ENCODE measurements at regions of chr6 and their contacts with region 1.

Region 1: DNA sequence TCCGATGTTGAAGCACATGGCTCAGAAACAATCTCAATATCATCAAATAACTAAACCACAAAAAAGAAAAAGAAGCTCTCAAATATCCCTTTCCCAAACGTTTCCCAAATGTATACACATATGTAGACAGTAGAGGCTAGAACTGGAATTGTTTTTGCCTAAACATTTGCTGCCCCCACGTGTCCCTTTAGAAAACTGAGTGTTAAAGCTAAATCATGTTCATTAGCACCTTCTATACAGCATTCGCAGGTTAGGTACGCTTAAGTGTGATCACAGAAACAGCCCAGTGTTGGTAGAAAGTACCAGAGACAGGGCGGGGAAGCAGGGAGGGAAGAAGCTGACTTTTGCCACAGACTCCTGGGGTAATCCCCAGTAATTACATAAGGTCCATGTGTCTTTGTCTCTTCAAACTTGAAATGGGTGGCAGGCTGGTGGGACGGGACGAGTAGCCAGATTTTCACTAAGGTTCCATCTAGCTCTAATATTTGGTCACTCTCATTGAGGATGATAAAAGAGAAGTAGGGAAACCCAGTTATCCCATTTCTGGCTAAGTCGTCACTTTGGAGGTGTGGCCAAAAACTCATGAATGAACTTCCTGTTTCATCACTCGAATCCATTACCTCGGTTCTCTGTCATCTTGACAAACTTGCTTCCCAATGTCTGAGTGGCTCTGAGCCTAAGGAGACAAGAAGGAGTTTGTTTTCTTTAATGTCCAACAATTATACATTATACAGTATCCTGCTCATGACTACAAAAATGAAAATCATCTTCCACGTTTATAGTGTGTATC is 15.0 kb upstream of the TFAP2A start:
- DNase-seq: peak; percentile 50
- ATAC-seq: peak; percentile 53
- H3K4me3 ChIP-seq: no peak overlapping the region
- H3K27ac ChIP-seq: no peak overlapping the region
- H3K4me1 ChIP-seq: peaks cover 7% of the 10 kb centered on the region
- H3K27me3 ChIP-seq: peaks cover 0 to 19% of the 10 kb centered on the region in 2 experiments; a peak in 3 of 5 replicates
- CTCF ChIP-seq: peak; percentile 79
- EP300 ChIP-seq: no peak
- POLR2A ChIP-seq: no peak
- RAD21 ChIP-seq: 0 out of 2 replicates have a peak, but pooled peaks have one; percentile 36

Region 2: DNA sequence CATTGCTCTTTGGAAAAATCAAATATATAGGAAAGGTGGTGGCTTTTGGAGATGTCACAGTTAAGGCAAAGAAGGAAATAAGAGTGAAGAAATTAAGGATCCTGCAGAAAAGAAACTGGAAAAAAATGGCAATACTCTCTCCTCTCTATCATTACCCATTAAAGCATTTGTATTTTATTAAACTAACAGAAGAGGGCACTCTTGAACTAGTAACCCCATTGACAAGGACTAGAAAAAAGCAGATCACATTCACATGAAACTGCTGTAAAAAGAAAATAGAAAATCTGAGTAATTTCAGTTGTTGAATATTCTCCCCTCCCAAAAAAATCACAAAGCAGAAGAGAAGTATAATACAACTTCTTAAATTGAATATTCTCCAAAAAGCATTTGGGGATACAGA is 1890.4 kb before region 1 on chr6:
- CTCF ChIA-PET with region 1: no interaction called
- POLR2A ChIA-PET with region 1: no interaction called
- in situ Hi-C with region 1: loop called (anchors 25 kb)
- intact Hi-C with region 1: loop called (anchors 2 kb)
- DNase-seq: peak; percentile 28
- ATAC-seq: peak; percentile 75
- H3K4me3 ChIP-seq: no peak overlapping the region
- H3K27ac ChIP-seq: no peak overlapping the region
- H3K4me1 ChIP-seq: no peaks in the 10 kb centered on the region
- H3K27me3 ChIP-seq: no peaks in the 10 kb centered on the region
- CTCF ChIP-seq: peak; percentile 54
- EP300 ChIP-seq: no peak
- POLR2A ChIP-seq: no peak
- RAD21 ChIP-seq: peak; percentile 66

Region 3: DNA sequence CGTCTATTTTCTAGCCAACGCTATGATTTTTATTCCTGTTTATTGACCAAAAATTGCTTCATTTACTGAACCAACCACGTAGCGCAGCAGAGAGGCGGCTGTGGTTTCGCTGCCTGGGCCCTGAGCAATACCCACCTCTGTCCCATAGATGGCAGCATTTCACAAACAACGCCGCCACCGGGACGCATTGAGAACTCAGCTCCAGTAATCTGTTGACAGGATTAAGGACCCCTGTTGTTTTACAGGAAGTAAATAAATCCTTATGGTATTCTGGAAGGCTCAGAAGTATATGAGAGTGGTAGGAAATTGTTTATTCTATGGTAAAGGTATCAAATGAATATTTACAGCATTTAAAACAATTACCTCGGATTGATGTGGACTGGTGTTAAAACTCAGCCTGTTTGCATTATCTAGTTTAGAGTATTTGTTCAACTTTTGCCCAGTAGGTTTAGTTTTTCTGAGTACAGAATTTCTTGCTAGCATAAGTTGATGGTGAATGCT is 1446.6 kb before region 1 on chr6:
- CTCF ChIA-PET with region 1: interaction called, 10 read pairs
- POLR2A ChIA-PET with region 1: interaction called, 3 read pairs
- in situ Hi-C with region 1: loop called (anchors 10 kb)
- intact Hi-C with region 1: loop called (anchors 1 kb)
- DNase-seq: peak; percentile 45
- ATAC-seq: peak; percentile 99
- H3K4me3 ChIP-seq: no peak overlapping the region
- H3K27ac ChIP-seq: no peak overlapping the region
- H3K4me1 ChIP-seq: no peaks in the 10 kb centered on the region
- H3K27me3 ChIP-seq: no peaks in the 10 kb centered on the region
- CTCF ChIP-seq: peak; percentile 93
- EP300 ChIP-seq: no peak
- POLR2A ChIP-seq: no peak
- RAD21 ChIP-seq: peak; percentile 75

Region 4: GRCh38 chr6:9412951-9413559 is 1016.8 kb before region 1 on chr6:
- CTCF ChIA-PET with region 1: no interaction called
- POLR2A ChIA-PET with region 1: no interaction called
- in situ Hi-C with region 1: no loop called
- intact Hi-C with region 1: loop called (anchors 2 kb)
- DNase-seq: peak; percentile 41
- ATAC-seq: peak; percentile 95
- H3K4me3 ChIP-seq: no peak overlapping the region
- H3K27ac ChIP-seq: no peak overlapping the region
- H3K4me1 ChIP-seq: no peaks in the 10 kb centered on the region
- H3K27me3 ChIP-seq: no peaks in the 10 kb centered on the region
- CTCF ChIP-seq: peak; percentile 68
- EP300 ChIP-seq: no peak
- POLR2A ChIP-seq: no peak
- RAD21 ChIP-seq: no peak

Region 5: DNA sequence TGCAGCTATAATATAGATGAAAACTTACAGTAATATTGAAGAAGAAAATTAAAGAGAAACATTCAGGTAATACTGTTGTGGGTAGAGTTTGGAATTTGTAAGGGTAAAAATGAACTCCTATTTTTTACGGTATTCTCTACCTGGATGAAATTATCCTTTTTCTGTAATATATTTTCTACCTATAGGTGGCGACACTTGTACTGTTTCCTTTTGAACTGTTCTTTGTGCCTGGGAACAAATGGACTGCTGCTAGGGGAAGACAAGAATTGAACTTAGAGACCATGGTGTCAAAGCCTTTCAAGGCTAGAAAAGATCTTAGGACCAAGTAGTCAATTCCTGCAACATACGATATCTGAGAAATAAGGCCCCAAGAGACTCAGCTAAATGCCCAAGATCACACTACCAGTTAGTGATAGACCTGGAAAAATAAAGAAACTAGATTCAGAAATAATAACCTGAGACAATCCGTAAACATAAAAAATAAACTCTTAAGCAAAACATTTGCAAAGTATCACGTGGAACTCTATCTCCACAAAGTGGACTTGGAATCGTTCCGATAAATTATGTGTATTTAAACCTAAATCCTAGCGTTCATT is 398.8 kb before region 1 on chr6:
- CTCF ChIA-PET with region 1: no interaction called
- POLR2A ChIA-PET with region 1: no interaction called
- in situ Hi-C with region 1: loop called (anchors 25 kb)
- intact Hi-C with region 1: loop called (anchors 1 kb)
- DNase-seq: peak; percentile 32
- ATAC-seq: peak; percentile 58; the same call in 1 of the 3 replicates
- H3K4me3 ChIP-seq: no peak overlapping the region
- H3K27ac ChIP-seq: no peak overlapping the region
- H3K4me1 ChIP-seq: peaks cover 12% of the 10 kb centered on the region
- H3K27me3 ChIP-seq: no peaks in the 10 kb centered on the region
- CTCF ChIP-seq: peak; percentile 49
- EP300 ChIP-seq: no peak
- POLR2A ChIP-seq: no peak
- RAD21 ChIP-seq: no peak